ENCODE measurements at regions of chr1 and their contacts with region 1.

Region 1: GRCh38 chr1:100606438-100606837 is 68.5 kb downstream of the GPR88 start:
- DNase-seq: peak; percentile 43 to 66 (median 58)
- ATAC-seq: peak; percentile 88 to 90
- H3K4me3 ChIP-seq: no peak overlapping the region
- H3K27ac ChIP-seq: no peak overlapping the region
- H3K4me1 ChIP-seq: peaks cover 3% of the 10 kb centered on the region
- H3K27me3 ChIP-seq: no peaks in the 10 kb centered on the region

Region 2: DNA sequence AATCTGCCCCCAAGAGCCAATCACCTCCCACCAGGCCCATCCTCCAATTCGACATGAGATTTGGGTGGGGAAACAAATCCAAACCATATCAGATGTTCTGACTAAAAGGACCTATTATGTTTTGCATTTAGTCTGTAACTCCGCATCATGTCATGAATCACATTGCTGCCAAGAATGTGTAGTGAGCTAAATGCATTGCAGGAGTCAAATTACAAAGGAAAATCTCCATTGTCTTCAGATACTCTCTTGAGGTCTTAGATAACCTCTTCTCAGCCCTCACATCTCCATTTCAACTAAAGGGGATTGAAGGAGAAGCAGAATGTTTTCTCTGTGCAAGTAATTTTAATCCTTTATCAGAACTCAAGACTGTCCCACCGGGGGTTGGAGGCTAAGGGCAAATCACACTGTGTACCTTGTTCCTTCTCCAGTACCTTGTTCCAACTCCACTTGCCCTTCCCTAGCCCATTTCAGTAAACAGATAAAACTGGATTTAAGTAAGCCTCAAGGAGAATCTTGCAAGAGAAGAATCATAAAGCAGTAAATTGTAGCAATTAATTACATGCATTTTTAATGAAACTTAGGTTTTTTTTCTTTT is 254.1 kb after region 1 on chr1:
- intact Hi-C with region 1: loop called in 3 of 4 experiments (anchors 5 kb)
- DNase-seq: peak in 2 of 3 donors; percentile 12 to 55
- ATAC-seq: peak; percentile 66 to 74
- H3K4me3 ChIP-seq: no peak overlapping the region
- H3K27ac ChIP-seq: no peak overlapping the region
- H3K4me1 ChIP-seq: no peaks in the 10 kb centered on the region
- H3K27me3 ChIP-seq: no peaks in the 10 kb centered on the region

Region 3: GRCh38 chr1:100866041-100866900 is 259.8 kb after region 1 on chr1:
- intact Hi-C with region 1: loop called (anchors 2 to 5 kb)
- DNase-seq: no peak
- ATAC-seq: peak; percentile 72 to 76
- H3K4me3 ChIP-seq: no peak overlapping the region
- H3K27ac ChIP-seq: no peak overlapping the region
- H3K4me1 ChIP-seq: no peaks in the 10 kb centered on the region
- H3K27me3 ChIP-seq: no peaks in the 10 kb centered on the region